Panc1 (cell line): ENCODE measurements at regions of chr7 and their contacts with region 1.

Region 1: GRCh38 chr7:113015032-113015645 is 71.5 kb downstream of the GPR85 start:
- DNase-seq: no peak
- ATAC-seq: no peak
- H3K4me3 ChIP-seq: no peak overlapping the region
- H3K27ac ChIP-seq: no peak overlapping the region
- H3K4me1 ChIP-seq: no peaks in the 10 kb centered on the region; the same call in 1 of the 2 replicates
- H3K27me3 ChIP-seq: no peaks in the 10 kb centered on the region
- CTCF ChIP-seq: peak; percentile 43; the same call in 1 of the 2 replicates

Region 2: DNA sequence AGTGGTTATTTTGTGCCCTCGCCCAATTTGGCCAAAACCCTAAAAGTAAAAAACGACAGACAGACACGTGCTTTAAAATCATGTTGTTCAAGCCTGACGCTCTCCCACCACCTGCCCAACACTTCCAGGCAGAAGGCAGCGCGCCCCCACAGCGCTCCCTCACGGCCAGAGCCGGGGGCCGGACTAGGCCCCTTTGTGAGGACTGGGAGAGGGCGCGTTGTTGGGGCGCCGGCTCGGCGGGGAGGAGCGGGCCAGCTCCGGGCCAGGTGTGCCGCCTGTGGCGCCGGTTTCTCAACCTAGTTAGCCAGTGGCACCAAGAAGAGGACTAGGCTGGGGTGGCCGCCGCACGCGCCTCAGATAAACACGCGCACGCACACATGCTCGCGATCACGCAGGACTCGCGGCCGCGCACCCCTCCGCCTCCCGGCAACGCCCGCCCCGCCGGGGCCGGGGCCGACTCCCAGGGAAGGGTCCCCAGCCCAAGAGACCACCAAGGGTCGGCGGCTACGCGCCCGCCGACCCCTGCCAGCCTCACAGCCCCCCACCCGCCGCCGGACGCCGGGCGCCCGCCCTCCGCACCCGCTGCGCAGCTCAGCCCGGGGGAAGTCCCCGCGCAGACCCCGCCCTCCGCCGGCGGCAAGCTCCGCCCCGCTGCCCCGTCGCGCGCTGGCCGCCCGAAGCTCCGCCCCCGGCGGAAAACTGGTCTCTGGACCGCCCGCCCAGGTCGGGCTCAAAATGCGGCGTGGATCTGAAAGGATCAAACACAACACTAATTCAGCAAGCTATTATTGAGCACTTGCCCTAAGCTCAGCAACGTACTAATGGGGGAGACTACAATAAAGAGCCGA is 1453.0 kb before region 1 on chr7 and contains the start of gene IMMP2L:
- CTCF ChIA-PET with region 1: no interaction called
- POLR2A ChIA-PET with region 1: no interaction called
- in situ Hi-C with region 1: no loop called
- intact Hi-C with region 1: no loop called
- DNase-seq: peak; percentile 85
- ATAC-seq: peak; percentile 99
- H3K4me3 ChIP-seq: peak within 1 kb of the TSS; percentile 65 to 75
- H3K27ac ChIP-seq: peak within 1 kb of the TSS; percentile 91
- H3K4me1 ChIP-seq: peaks cover 5% of the 10 kb centered on the region; the same call in 1 of the 2 replicates
- H3K27me3 ChIP-seq: no peaks in the 10 kb centered on the region
- CTCF ChIP-seq: peak; percentile 56
- total RNA-seq, gene IMMP2L: 8.8 TPM

Region 3: GRCh38 chr7:113099284-113099919 is 84.3 kb after region 1 on chr7:
- CTCF ChIA-PET with region 1: no interaction called
- POLR2A ChIA-PET with region 1: no interaction called
- in situ Hi-C with region 1: no loop called
- intact Hi-C with region 1: no loop called
- DNase-seq: no peak
- ATAC-seq: no peak
- H3K4me3 ChIP-seq: no peak overlapping the region
- H3K27ac ChIP-seq: no peak overlapping the region
- H3K4me1 ChIP-seq: no peaks in the 10 kb centered on the region
- H3K27me3 ChIP-seq: no peaks in the 10 kb centered on the region
- CTCF ChIP-seq: no peak

Region 4: GRCh38 chr7:113199841-113200240 is 184.7 kb after region 1 on chr7:
- CTCF ChIA-PET with region 1: no interaction called
- POLR2A ChIA-PET with region 1: no interaction called
- in situ Hi-C with region 1: no loop called
- intact Hi-C with region 1: no loop called
- DNase-seq: no peak
- ATAC-seq: no peak
- H3K4me3 ChIP-seq: no peak overlapping the region
- H3K27ac ChIP-seq: no peak overlapping the region
- H3K4me1 ChIP-seq: no peaks in the 10 kb centered on the region
- H3K27me3 ChIP-seq: no peaks in the 10 kb centered on the region
- CTCF ChIP-seq: no peak

Region 5: GRCh38 chr7:113232885-113233284 is 217.7 kb after region 1 on chr7:
- CTCF ChIA-PET with region 1: no interaction called
- POLR2A ChIA-PET with region 1: no interaction called
- in situ Hi-C with region 1: no loop called
- intact Hi-C with region 1: no loop called
- DNase-seq: no peak
- ATAC-seq: no peak
- H3K4me3 ChIP-seq: no peak overlapping the region
- H3K27ac ChIP-seq: no peak overlapping the region
- H3K4me1 ChIP-seq: no peaks in the 10 kb centered on the region
- H3K27me3 ChIP-seq: no peaks in the 10 kb centered on the region
- CTCF ChIP-seq: no peak

Region 6: GRCh38 chr7:113698556-113699220 is 683.5 kb after region 1 on chr7:
- CTCF ChIA-PET with region 1: no interaction called
- POLR2A ChIA-PET with region 1: no interaction called
- in situ Hi-C with region 1: no loop called
- intact Hi-C with region 1: loop called (anchors 5 kb)
- DNase-seq: peak; percentile 20
- ATAC-seq: no peak
- H3K4me3 ChIP-seq: no peak overlapping the region
- H3K27ac ChIP-seq: no peak overlapping the region
- H3K4me1 ChIP-seq: no peaks in the 10 kb centered on the region
- H3K27me3 ChIP-seq: no peaks in the 10 kb centered on the region
- CTCF ChIP-seq: peak; percentile 76; the same call in 1 of the 2 replicates